Naive thymus-derived CD4-positive, alpha-beta T cell (primary cell): ENCODE measurements at regions of chr2 and their contacts with region 1.

Region 1: DNA sequence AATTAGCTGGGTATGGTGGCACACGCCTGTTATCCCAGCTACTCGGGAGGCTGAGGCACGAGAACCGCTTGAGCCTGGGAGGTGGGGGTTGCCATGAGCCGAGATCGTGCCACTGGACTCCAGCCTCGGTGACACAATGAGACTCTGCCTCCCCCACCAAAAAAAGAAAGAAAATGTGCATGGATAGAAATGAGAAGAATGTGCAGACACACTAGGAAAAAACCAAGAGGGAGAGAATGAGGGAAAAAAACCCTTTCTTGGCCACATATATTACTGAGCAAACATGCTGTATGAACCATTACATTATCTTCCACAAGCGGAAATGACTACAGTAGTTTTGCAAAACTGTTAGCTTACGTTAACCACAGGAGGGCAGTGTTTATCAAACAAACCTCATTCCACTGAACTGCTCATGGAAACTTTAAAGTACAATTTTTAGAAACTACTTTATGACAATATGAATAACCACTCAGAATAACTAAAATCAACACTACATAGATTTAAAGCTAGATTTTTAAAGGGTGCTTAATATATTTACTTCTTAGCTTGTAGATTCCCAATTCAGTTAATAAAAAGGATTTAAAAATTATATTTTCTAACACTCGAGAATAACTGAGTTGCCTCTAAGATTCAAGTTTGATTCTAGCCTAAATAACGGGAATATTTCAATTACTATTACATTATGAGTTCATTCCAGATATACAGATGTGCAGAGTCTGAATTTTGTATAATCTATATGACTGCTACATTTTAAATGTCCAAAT is 26.4 kb downstream of the ASXL2 start:
- DNase-seq: peak in 8 of 9 donors; percentile 34 to 77 (median 67)
- ATAC-seq: peak; percentile 99
- H3K4me3 ChIP-seq: no peak overlapping the region
- H3K4me3 Mint-ChIP-seq: peak overlapping the region in 9 of 10 donors; percentile 43 to 83 (median 74)
- H3K27ac ChIP-seq: peak overlapping the region; percentile 17
- H3K27ac Mint-ChIP-seq: peak overlapping the region in 6 of 9 donors; percentile 21 to 82 (median 50)
- H3K4me1 ChIP-seq: peaks cover 10 to 22% of the 10 kb centered on the region in 2 donors
- H3K4me1 Mint-ChIP-seq: peaks cover 38 to 55% (median 48%) of the 10 kb centered on the region in 7 donors
- H3K27me3 ChIP-seq: no peaks in the 10 kb centered on the region
- H3K27me3 Mint-ChIP-seq: no peaks in the 10 kb centered on the region

Region 2: GRCh38 chr2:25437881-25438662 is 413.9 kb before region 1 on chr2:
- CTCF ChIA-PET with region 1: no interaction called
- POLR2A ChIA-PET with region 1: no interaction called
- intact Hi-C with region 1: no loop called
- DNase-seq: no peak
- ATAC-seq: no peak
- H3K4me3 ChIP-seq: no peak overlapping the region
- H3K4me3 Mint-ChIP-seq: no peak overlapping the region
- H3K27ac ChIP-seq: no peak overlapping the region
- H3K27ac Mint-ChIP-seq: no peak overlapping the region
- H3K4me1 ChIP-seq: no peaks in the 10 kb centered on the region
- H3K4me1 Mint-ChIP-seq: peaks cover 0 to 9% (median 0%) of the 10 kb centered on the region in 7 donors
- H3K27me3 ChIP-seq: no peaks in the 10 kb centered on the region
- H3K27me3 Mint-ChIP-seq: no peaks in the 10 kb centered on the region

Region 3: DNA sequence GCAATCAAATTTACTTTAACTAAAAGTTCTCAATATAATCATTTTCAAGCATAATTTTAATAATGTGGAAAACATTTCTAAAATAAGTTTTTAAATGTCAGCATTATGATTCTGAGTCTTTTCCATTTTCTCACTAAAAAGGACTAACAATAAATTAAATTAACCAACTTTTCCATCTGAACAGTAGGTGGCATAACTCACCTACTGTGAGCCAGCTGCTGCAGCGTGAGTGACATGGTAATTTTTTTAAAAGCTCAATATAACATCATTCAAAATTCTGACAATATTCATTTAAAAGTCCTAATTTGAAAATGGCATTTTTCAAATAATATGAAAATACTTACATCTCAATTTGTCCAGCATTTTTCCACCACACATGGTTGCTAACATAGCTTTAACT is 245.0 kb before region 1 on chr2:
- CTCF ChIA-PET with region 1: interaction called, 3 read pairs
- POLR2A ChIA-PET with region 1: no interaction called
- intact Hi-C with region 1: loop called (anchors 1 to 5 kb)
- DNase-seq: peak in 5 of 9 donors; percentile 20 to 47 (median 33)
- ATAC-seq: peak; percentile 57
- H3K4me3 ChIP-seq: no peak overlapping the region
- H3K4me3 Mint-ChIP-seq: no peak overlapping the region
- H3K27ac ChIP-seq: no peak overlapping the region
- H3K27ac Mint-ChIP-seq: no peak overlapping the region
- H3K4me1 ChIP-seq: no peaks in the 10 kb centered on the region
- H3K4me1 Mint-ChIP-seq: peaks cover 0 to 21% (median 4%) of the 10 kb centered on the region in 7 donors
- H3K27me3 ChIP-seq: no peaks in the 10 kb centered on the region
- H3K27me3 Mint-ChIP-seq: no peaks in the 10 kb centered on the region

Region 4: GRCh38 chr2:25794544-25795276 is 57.2 kb before region 1 on chr2:
- CTCF ChIA-PET with region 1: interaction called, 4 read pairs
- POLR2A ChIA-PET with region 1: interaction called, 4 read pairs
- intact Hi-C with region 1: loop called (anchors 1 to 2 kb)
- DNase-seq: peak in 6 of 9 donors; percentile 33 to 61 (median 47)
- ATAC-seq: peak; percentile 90
- H3K4me3 ChIP-seq: peak overlapping the region; percentile 23
- H3K4me3 Mint-ChIP-seq: peak overlapping the region; percentile 68 to 92 (median 86)
- H3K27ac ChIP-seq: peak overlapping the region; percentile 63
- H3K27ac Mint-ChIP-seq: peak overlapping the region; percentile 87 to 97 (median 95)
- H3K4me1 ChIP-seq: peaks cover 43 to 51% of the 10 kb centered on the region in 2 donors
- H3K4me1 Mint-ChIP-seq: peaks cover 48 to 95% (median 86%) of the 10 kb centered on the region in 7 donors
- H3K27me3 ChIP-seq: no peaks in the 10 kb centered on the region
- H3K27me3 Mint-ChIP-seq: no peaks in the 10 kb centered on the region

Region 5: GRCh38 chr2:25822190-25823117 is 29.5 kb before region 1 on chr2:
- CTCF ChIA-PET with region 1: interaction called, 16 read pairs
- POLR2A ChIA-PET with region 1: interaction called, 4 read pairs
- intact Hi-C with region 1: loop called (anchors 2 to 5 kb)
- DNase-seq: peak; percentile 43 to 70 (median 61)
- ATAC-seq: peak; percentile 89
- H3K4me3 ChIP-seq: peak overlapping the region; percentile 44
- H3K4me3 Mint-ChIP-seq: peak overlapping the region; percentile 71 to 87 (median 82)
- H3K27ac ChIP-seq: peak overlapping the region; percentile 54
- H3K27ac Mint-ChIP-seq: peak overlapping the region; percentile 63 to 95 (median 84)
- H3K4me1 ChIP-seq: peaks cover 18 to 38% of the 10 kb centered on the region in 2 donors
- H3K4me1 Mint-ChIP-seq: peaks cover 44 to 85% (median 58%) of the 10 kb centered on the region in 7 donors
- H3K27me3 ChIP-seq: no peaks in the 10 kb centered on the region
- H3K27me3 Mint-ChIP-seq: no peaks in the 10 kb centered on the region

Region 6: DNA sequence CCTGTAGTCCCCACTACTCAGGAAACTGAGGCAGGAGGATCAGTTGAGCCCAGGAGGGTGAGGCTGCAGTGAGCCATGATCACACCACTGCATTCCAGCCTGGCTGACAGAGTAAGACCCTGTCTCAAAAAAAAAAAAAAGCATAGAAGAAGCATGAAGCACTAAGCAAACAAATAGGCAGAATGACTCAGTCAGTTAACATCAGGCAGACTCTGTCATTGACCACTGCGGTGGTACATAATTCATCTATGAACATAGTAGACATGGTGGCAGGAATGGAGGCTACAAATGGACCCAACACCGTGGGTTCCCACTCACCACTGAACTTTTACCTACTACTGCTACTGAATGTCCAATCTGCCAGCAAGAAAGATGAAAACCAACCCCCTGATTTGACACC is 34.0 kb after region 1 on chr2:
- CTCF ChIA-PET with region 1: no interaction called
- POLR2A ChIA-PET with region 1: no interaction called
- intact Hi-C with region 1: no loop called
- DNase-seq: no peak
- ATAC-seq: no peak
- H3K4me3 ChIP-seq: no peak overlapping the region
- H3K4me3 Mint-ChIP-seq: no peak overlapping the region
- H3K27ac ChIP-seq: no peak overlapping the region
- H3K27ac Mint-ChIP-seq: no peak overlapping the region
- H3K4me1 ChIP-seq: no peaks in the 10 kb centered on the region
- H3K4me1 Mint-ChIP-seq: peaks cover 0 to 3% (median 0%) of the 10 kb centered on the region in 7 donors
- H3K27me3 ChIP-seq: no peaks in the 10 kb centered on the region
- H3K27me3 Mint-ChIP-seq: peaks cover 0 to 4% (median 3%) of the 10 kb centered on the region in 5 donors

Region 7: GRCh38 chr2:26144953-26145680 is 293.2 kb after region 1 on chr2:
- CTCF ChIA-PET with region 1: interaction called, 4 read pairs
- POLR2A ChIA-PET with region 1: no interaction called
- intact Hi-C with region 1: loop called (anchors 1 kb)
- DNase-seq: peak; percentile 22 to 59 (median 47)
- ATAC-seq: peak; percentile 73
- H3K4me3 ChIP-seq: no peak overlapping the region
- H3K4me3 Mint-ChIP-seq: no peak overlapping the region
- H3K27ac ChIP-seq: no peak overlapping the region
- H3K27ac Mint-ChIP-seq: peak overlapping the region in 3 of 9 donors; percentile 4 to 21 (median 7)
- H3K4me1 ChIP-seq: no peaks in the 10 kb centered on the region
- H3K4me1 Mint-ChIP-seq: peaks cover 0 to 5% (median 0%) of the 10 kb centered on the region in 7 donors
- H3K27me3 ChIP-seq: no peaks in the 10 kb centered on the region
- H3K27me3 Mint-ChIP-seq: peaks cover 6 to 10% (median 8%) of the 10 kb centered on the region in 5 donors